Posterior vena cava (tissue), 2 donors: ENCODE measurements at regions of chr16 and their contacts with region 1.

Region 1: GRCh38 chr16:53054670-53055485 is at the start of gene CHD9:
- DNase-seq: peak; percentile 94
- total RNA-seq, gene CHD9: 84.7 to 90.4 TPM

Region 2: GRCh38 chr16:53219795-53220454 is 165.0 kb after region 1 on chr16:
- intact Hi-C with region 1: loop called in 1 of 2 experiments (anchors 10 kb)
- DNase-seq: no peak